MCF 10A (cell line): ENCODE measurements at regions of chr16 and their contacts with region 1.

Region 1: GRCh38 chr16:60203525-60204124 is 1469.5 kb upstream of the GOT2 start:
- DNase-seq: peak; percentile 0
- H3K4me3 Mint-ChIP-seq: no peak overlapping the region
- H3K27ac Mint-ChIP-seq: no peak overlapping the region
- H3K4me1 Mint-ChIP-seq: peaks cover 7% of the 10 kb centered on the region
- H3K27me3 Mint-ChIP-seq: no peaks in the 10 kb centered on the region
- CTCF ChIP-seq: peak; percentile 48

Region 2: DNA sequence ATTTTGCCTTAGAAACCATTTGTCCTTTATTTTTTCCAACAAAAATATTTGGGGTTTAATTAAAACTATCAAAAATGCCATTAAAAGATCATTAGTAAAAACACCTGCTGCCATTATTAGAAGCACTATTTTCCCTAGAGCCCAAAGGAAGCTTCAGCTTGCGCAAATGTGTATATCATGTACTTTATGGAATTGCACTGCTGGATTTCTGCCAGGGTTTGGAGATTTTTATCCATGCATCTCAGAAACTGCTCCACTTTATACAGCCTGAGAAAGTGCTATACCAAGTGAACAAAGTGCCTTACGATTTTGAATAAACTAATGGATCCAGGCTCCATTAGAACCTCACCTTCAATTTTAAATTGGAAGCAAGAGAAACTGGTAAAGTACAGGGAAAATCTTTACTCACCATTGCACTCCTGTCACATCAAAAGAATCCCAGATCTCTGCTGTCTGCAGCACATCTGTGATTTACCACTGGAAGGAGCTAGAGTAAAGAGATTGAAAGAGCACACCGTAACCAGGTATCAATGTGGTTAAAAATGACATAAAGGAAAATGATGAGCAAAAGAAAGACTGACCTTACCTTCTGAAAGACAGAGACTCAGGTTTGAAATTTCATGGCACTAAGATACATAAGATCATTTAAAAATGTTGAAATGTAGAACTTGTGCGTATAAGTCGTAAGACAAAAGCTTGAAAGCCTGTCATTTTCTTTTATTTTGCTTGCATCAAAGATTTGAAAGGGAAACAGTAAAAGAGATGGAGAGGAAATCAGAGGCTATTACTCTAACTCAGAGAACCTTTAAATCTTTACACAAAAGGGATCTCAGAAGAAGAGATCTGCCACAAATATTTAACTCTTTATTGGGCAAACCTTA is 791.4 kb before region 1 on chr16:
- CTCF ChIA-PET with region 1: interaction called, 6 read pairs
- POLR2A ChIA-PET with region 1: no interaction called
- intact Hi-C with region 1: loop called (anchors 1 kb)
- DNase-seq: peak; percentile 9
- H3K4me3 Mint-ChIP-seq: no peak overlapping the region
- H3K27ac Mint-ChIP-seq: no peak overlapping the region
- H3K4me1 Mint-ChIP-seq: no peaks in the 10 kb centered on the region
- H3K27me3 Mint-ChIP-seq: no peaks in the 10 kb centered on the region
- CTCF ChIP-seq: peak; percentile 68

Region 3: DNA sequence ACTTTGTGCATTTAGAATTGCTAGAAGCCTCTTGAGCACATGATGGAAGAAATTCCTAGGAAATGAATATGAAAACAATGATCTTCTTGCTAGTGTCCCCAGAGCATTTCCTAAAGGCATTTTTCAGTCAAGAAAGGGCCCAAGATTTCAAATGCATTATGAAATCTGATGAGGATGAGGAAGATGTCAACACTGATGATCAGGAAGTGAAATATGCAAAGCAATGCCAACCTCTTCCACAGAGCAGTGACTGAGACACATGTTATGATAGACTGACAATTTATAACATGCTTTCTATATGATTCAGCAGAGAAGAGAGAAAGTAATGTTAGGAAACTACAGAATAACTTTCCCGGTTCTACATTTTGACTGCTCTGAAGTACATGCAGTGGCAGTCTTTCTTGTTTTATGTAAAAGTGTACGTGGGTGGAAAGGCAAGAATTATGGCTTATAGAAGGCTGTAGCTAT is 610.4 kb before region 1 on chr16:
- CTCF ChIA-PET with region 1: no interaction called
- POLR2A ChIA-PET with region 1: no interaction called
- intact Hi-C with region 1: loop called (anchors 5 kb)
- DNase-seq: peak; percentile 50
- H3K4me3 Mint-ChIP-seq: peak overlapping the region; percentile 55
- H3K27ac Mint-ChIP-seq: no peak overlapping the region
- H3K4me1 Mint-ChIP-seq: peaks cover 18% of the 10 kb centered on the region
- H3K27me3 Mint-ChIP-seq: no peaks in the 10 kb centered on the region
- CTCF ChIP-seq: no peak

Region 4: GRCh38 chr16:60225541-60225940 is 21.9 kb after region 1 on chr16:
- CTCF ChIA-PET with region 1: interaction called, 10 read pairs
- POLR2A ChIA-PET with region 1: no interaction called
- intact Hi-C with region 1: no loop called
- DNase-seq: no peak
- H3K4me3 Mint-ChIP-seq: no peak overlapping the region
- H3K27ac Mint-ChIP-seq: no peak overlapping the region
- H3K4me1 Mint-ChIP-seq: peaks cover 1% of the 10 kb centered on the region
- H3K27me3 Mint-ChIP-seq: no peaks in the 10 kb centered on the region
- CTCF ChIP-seq: no peak

Region 5: GRCh38 chr16:60882801-60883200 is 679.2 kb after region 1 on chr16:
- CTCF ChIA-PET with region 1: no interaction called
- POLR2A ChIA-PET with region 1: no interaction called
- intact Hi-C with region 1: no loop called
- DNase-seq: no peak
- H3K4me3 Mint-ChIP-seq: no peak overlapping the region
- H3K27ac Mint-ChIP-seq: no peak overlapping the region
- H3K4me1 Mint-ChIP-seq: no peaks in the 10 kb centered on the region
- H3K27me3 Mint-ChIP-seq: no peaks in the 10 kb centered on the region
- CTCF ChIP-seq: no peak